Left colon (tissue), 2 donors: ENCODE measurements at regions of chr19 and their contacts with region 1.

Region 1: DNA sequence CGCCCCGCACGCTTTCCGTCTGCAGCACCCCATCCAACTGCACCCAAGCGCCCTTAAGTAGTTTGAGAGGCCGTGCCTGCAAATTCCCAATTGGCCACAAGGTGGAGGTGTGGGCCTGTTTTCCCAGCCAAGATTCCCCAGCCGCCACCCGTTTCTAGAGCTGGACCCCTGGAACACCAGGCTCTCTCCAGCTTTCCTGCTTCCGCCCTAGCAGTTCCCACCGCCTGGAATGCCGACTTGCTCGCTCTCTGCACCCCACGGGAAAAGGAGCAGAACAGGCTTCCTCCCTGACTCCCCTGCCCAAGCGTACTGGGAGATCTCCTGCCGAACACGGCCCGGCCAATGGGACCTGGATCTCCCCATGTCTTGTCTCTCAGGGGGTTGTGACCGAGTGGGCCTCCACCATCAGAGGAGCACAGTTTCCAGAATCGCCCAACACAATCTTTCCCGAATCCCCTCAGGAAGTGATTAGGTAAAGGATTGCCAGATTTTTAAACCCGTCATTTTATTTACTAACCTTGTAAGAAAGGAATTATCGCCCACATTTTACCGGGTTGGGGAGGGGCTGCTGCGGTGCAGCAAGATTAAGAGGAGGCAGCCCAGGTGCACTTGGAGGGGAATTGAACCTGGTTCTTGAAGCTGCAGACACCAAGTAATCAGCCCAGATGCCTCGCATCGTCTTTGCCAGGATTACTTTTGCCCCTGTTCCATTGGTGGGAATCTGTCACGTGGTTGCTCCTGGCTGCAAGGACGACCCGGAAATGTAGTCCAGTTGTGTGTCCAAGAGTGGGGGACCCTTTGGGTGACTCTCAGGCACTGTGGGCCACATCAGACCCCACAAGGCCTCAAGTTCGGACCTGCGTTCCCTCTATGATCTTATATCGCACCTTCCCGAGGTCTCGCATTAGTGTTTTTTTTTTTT is 3.5 kb upstream of the NAPSA start:
- DNase-seq: peak; percentile 88 to 90
- ATAC-seq: peak; percentile 96

Region 2: DNA sequence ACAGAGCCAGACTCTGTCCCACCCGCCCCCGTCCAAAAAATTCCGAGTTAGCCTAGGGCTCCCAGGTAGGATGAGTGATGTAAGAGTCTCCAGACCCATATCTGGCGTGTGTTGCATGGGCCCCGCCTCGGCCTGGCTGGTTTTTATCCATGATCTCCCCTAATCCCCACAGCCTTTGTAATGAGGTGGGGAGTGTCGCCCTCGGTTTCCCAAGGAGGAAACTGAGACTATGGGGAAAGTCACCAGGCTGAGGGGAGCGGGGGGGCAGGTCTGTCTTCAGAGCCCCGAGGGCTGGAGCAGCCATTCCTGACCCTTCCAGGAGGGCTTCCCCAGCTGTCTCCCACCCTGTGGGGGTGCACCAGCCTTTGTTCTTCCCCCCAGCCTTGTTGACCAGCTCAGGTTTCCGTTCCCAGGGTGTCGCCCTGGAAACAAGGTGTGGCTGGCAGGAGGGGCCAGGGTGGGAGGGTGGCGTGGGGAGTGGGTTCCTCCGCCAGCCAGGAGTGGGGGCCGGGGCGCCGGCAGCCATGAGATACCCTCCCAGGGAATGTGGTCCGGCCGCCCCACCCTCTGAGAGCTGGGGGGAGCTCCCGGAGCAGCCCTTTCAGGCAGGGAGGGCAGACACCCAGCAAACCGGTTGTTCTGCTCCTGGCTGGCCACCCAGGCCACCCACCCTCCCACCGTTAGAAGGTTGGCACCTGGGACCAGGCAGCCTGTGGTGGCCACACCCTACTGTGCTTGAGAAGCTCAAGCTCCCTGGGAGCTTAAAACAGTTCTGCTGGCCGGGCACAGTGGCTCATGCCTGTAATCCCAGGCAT is 153.9 kb before region 1 on chr19:
- intact Hi-C with region 1: no loop called
- DNase-seq: peak; percentile 81 to 89
- ATAC-seq: peak; percentile 96

Region 3: GRCh38 chr19:50414864-50415660 is 46.2 kb after region 1 on chr19:
- intact Hi-C with region 1: loop called in 1 of 2 experiments (anchors 10 kb)
- DNase-seq: peak; percentile 59 to 87
- ATAC-seq: peak; percentile 43

Region 4: DNA sequence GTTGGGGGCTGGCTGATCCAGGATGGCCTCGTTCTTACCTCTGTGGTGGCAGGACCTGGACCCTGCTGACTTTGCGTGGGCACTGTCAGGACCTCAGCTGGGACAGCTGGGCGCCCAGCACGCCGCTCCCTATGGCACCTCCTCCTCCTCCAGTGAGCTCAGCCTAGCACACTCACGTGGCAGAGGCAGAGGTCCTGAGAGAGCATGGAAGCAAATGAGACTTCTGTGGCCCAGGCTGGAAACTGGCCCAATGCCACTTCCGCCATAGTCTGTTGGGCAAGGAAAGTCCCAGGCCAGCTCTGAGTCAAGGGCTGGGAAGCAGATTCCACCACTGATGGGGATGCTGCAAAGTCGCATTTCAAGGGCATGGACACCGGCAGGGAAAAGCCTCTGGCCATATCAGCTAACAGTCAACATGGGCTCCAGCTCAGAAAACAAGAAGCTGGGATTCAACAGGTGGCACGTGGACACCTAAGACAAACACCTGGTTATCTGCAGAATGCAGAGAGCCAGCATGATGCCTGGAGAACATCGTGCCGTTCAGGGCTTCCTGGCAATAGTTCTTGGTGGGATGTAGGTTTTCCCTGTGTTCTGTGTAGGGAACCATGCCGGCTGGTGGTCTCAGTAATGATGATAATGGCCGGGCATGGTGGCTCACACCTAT is 80.5 kb after region 1 on chr19:
- intact Hi-C with region 1: no loop called
- DNase-seq: no peak
- ATAC-seq: no peak

Region 5: GRCh38 chr19:50461066-50461875 is 92.4 kb after region 1 on chr19:
- intact Hi-C with region 1: loop called in 1 of 2 experiments (anchors 10 kb)
- DNase-seq: peak in 1 of 2 donors; percentile 71
- ATAC-seq: peak; percentile 81

Region 6: DNA sequence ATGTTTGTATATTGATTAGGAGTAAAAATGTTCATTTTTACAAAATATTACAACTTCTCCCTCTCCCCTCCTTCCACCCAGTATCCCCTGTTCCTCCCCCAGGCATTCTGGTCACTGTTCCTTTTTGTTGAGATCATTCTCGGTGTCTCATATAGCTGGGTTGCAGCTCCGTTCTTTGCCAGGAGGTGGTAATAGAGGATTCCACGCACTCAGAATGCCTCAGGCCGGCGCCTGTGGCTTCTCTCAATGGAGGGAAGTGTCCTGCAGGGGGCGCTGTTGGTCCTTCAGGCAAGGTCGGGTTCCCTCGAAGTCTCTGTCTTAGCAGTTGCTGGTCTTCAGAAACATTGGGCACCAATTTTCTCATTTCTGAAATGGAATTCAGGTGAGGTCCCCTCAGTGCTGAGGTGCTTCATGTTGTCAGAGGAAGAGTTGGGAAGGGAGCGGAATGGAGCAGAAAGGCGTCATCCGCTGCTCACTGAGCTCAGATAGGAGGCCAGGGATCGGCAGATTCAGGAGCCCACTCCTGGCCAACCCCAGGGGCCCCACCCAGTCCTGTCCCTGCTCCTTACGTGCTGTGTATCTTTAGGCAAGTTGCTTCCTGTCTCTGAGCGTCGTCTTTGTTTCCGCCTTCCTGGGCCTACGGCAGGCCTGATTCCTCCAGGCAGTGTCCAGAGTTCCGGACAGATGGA is 118.1 kb after region 1 on chr19:
- intact Hi-C with region 1: no loop called
- DNase-seq: peak in 1 of 2 donors; percentile 40
- ATAC-seq: no peak